ENCODE measurements at regions of chr6 and their contacts with region 1.

Region 1: DNA sequence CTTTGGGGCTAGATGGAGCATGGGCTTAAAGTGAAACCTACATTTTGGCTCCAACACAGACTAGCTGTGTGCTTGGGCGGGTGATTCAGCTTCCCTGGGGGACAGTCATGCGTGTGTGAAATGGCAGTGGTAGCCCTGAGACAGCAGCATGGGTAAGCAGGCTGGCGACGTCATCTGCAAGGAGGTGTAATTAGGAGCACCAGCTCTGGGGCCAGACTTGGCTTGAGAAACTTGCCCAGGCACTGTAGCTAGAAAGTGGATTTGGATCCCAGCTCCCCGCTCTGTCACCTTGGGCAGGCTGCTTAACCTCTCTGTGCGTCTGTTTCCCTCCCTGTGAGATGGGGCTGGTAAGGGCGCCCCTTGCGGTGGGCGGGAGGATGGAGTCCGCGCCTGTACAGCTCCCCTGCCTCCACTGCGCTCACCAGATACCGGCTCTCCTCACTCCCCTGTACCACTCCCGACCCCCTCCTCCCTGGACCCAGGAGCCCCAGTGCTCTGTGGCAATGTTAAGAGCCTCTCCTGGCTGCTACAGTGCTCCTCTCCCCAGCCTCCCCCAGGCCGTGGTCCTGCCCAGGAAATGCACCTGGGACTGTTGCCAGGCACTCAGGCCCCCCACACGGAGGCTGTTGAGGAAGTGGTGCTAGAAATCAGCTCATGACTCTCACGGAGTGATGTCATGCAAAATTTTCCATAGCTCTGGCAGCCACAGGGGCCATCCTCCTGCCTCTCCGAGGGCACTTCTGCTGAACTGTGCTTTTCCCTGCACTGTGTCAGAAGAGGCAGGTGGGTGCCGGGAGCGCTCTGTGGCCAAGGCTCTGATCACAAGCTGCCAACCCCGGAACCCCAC is 44.6 kb downstream of the SYNJ2 start:
- DNase-seq: peak; percentile 76
- H3K4me3 Mint-ChIP-seq: peak overlapping the region; percentile 81
- H3K27ac Mint-ChIP-seq: peak overlapping the region; percentile 99
- H3K4me1 Mint-ChIP-seq: peaks cover 43% of the 10 kb centered on the region
- H3K27me3 Mint-ChIP-seq: no peaks in the 10 kb centered on the region

Region 2: DNA sequence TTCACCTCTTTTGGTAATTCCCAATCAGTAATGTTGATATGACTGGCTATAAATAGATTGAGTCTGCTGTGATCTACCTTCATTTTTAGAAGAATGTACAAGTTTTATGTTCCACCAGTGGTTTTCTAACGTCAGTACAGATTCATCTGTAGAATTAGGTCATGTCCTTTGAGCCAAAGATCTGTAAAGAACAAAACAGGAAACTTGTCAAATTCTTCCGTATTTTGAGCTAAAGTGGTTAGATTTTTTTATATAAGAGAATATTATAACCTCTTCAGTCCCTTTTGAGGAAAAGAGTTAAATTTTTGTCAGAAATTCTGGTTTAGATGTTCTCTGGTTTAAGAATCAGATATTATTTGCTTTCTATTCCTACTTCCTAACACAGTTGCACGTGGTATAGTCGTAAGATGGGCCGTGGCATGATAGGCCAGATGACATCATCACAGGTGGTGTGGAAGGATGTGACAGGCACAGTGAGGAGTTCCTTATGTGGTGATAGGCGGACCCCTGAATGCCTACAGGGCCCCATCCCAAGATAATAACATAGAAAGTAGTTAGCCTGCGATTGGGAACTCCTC is 141.0 kb before region 1 on chr6:
- intact Hi-C with region 1: loop called (anchors 1 kb)
- DNase-seq: peak; percentile 60
- H3K4me3 Mint-ChIP-seq: peak overlapping the region; percentile 45
- H3K27ac Mint-ChIP-seq: peak overlapping the region; percentile 88
- H3K4me1 Mint-ChIP-seq: peaks cover 79% of the 10 kb centered on the region
- H3K27me3 Mint-ChIP-seq: no peaks in the 10 kb centered on the region

Region 3: DNA sequence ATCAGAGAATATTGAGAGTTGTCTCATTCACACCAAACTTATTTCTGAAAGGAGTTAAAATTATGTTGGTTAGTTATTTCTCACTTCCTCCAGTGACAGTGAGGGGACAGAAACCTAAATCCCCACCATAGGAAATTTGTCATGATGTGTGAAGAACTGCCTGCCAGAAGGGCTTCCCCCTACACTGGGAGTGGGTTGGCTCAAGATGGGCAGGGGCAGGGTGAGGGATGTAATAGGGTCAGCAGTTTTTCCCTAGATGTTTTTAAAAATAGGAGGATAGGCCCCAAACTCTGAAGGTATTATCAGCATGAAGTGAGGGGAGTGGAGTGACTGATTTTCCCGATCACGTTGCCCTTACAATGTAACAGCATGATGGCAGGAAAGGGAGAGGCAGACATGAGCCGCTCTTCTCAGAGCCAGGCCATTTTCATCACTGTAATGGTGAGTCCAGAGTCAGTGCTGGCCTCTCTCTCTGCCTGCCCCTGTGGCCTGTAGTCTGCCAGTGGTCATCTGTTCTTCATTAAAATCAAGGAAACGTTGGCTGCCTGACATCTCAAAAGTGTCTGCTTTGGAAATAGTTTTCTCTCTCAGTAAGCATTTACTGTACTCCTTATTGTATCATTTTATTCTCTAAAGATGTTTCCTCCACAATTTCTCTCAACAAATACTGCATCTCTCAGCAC is 104.5 kb before region 1 on chr6:
- intact Hi-C with region 1: no loop called
- DNase-seq: no peak
- H3K4me3 Mint-ChIP-seq: no peak overlapping the region
- H3K27ac Mint-ChIP-seq: no peak overlapping the region
- H3K4me1 Mint-ChIP-seq: no peaks in the 10 kb centered on the region
- H3K27me3 Mint-ChIP-seq: no peaks in the 10 kb centered on the region

Region 4: GRCh38 chr6:158002951-158003853 is 23.1 kb before region 1 on chr6:
- intact Hi-C with region 1: loop called (anchors 1 kb)
- DNase-seq: no peak
- H3K4me3 Mint-ChIP-seq: peak overlapping the region; percentile 2
- H3K27ac Mint-ChIP-seq: peak overlapping the region; percentile 64
- H3K4me1 Mint-ChIP-seq: peaks cover 47% of the 10 kb centered on the region
- H3K27me3 Mint-ChIP-seq: no peaks in the 10 kb centered on the region

Region 5: GRCh38 chr6:158047127-158047518 is 20.8 kb after region 1 on chr6:
- intact Hi-C with region 1: loop called (anchors 1 kb)
- DNase-seq: peak; percentile 55
- H3K4me3 Mint-ChIP-seq: peak overlapping the region; percentile 53
- H3K27ac Mint-ChIP-seq: peak overlapping the region; percentile 66
- H3K4me1 Mint-ChIP-seq: peaks cover 38% of the 10 kb centered on the region
- H3K27me3 Mint-ChIP-seq: no peaks in the 10 kb centered on the region

Region 6: GRCh38 chr6:158207422-158207788 is 181.1 kb after region 1 on chr6:
- intact Hi-C with region 1: loop called (anchors 2 kb)
- DNase-seq: peak; percentile 68
- H3K4me3 Mint-ChIP-seq: peak overlapping the region; percentile 56
- H3K27ac Mint-ChIP-seq: peak overlapping the region; percentile 96
- H3K4me1 Mint-ChIP-seq: peaks cover 63% of the 10 kb centered on the region
- H3K27me3 Mint-ChIP-seq: no peaks in the 10 kb centered on the region

Region 7: GRCh38 chr6:158417760-158418098 is 391.5 kb after region 1 on chr6:
- intact Hi-C with region 1: no loop called
- DNase-seq: no peak
- H3K4me3 Mint-ChIP-seq: no peak overlapping the region
- H3K27ac Mint-ChIP-seq: no peak overlapping the region
- H3K4me1 Mint-ChIP-seq: no peaks in the 10 kb centered on the region
- H3K27me3 Mint-ChIP-seq: no peaks in the 10 kb centered on the region

Measured in activated T-helper 1 cell treated with anti-CD3 and anti-CD28 coated beads, Interleukin-12 subunit alpha, Interleukin-12 subunit beta, Interleukin-2, Interleukin-4 antibody, amounts not matched to agents 30 ng/mL and 10 ng/mL and 1 ng/mL, durations not matched to agents 14 hours and 24 hours and 36 hours (primary cell).